CD8-positive, alpha-beta T cell (primary cell): ENCODE measurements at regions of chr10 and their contacts with region 1.

Region 1: DNA sequence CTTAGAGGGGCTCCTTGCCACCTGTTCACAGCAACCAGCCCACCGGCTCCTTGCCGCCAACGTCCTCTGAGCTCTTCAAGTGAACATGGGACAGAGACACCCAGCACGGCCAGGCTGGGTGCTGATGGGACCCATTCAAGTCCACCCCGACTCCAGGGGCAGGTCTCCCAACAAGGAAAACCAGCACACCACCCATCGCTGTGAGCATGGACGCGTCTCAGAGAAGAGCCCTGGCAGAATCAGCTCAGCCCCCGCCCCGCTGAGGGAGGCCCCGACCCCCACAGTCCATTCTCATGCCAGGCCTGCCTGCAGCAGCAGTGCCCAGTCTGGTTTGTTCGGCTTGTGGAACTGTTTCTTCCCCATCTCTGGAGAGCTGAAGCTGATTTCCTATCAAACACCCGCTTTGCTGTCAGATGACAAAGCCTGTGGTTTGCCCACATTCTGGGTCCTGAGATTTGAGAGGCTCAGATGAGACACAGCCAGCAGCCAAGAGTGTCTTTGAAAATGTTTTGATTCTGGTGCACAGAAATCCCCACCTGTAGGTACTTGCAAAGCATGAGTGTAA is 216.6 kb downstream of the ZMYND11 start:
- DNase-seq: peak in 8 of 9 experiments; percentile 14 to 78 (median 54)
- ATAC-seq: peak; percentile 88
- H3K4me3 ChIP-seq: no peak overlapping the region
- H3K4me3 Mint-ChIP-seq: peak overlapping the region; percentile 72
- H3K27ac ChIP-seq: peak overlapping the region in 1 of 2 experiments; percentile 10
- H3K27ac Mint-ChIP-seq: peak overlapping the region; percentile 88
- H3K4me1 ChIP-seq: peaks cover 17% of the 10 kb centered on the region
- H3K4me1 Mint-ChIP-seq: peaks cover 25% of the 10 kb centered on the region
- H3K27me3 ChIP-seq: no peaks in the 10 kb centered on the region
- H3K27me3 Mint-ChIP-seq: no peaks in the 10 kb centered on the region
- CTCF ChIP-seq: no peak

Region 2: DNA sequence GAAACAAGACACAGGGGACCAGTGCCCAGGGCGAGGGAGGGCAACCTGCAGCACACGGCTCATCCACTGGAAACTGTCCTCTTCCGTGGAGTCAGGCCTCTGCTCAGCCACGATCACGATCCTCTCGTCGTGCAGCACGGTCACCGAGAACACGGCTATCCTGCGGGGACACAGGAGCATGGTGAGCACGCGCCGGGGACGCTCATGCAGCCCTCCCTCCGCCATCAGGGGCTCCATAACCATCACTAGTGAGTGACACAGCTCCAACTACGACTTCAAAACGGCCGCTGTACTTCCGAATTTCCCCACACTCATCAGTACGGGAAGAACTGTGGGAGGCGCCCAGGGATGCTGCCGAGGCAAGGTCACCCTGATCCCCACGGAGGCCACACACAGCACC is 11.3 kb after region 1 on chr10:
- CTCF ChIA-PET with region 1: no interaction called
- POLR2A ChIA-PET with region 1: no interaction called
- intact Hi-C with region 1: no loop called
- DNase-seq: no peak
- ATAC-seq: no peak
- H3K4me3 ChIP-seq: no peak overlapping the region
- H3K4me3 Mint-ChIP-seq: no peak overlapping the region
- H3K27ac ChIP-seq: no peak overlapping the region
- H3K27ac Mint-ChIP-seq: no peak overlapping the region
- H3K4me1 ChIP-seq: no peaks in the 10 kb centered on the region
- H3K4me1 Mint-ChIP-seq: no peaks in the 10 kb centered on the region
- H3K27me3 ChIP-seq: no peaks in the 10 kb centered on the region
- H3K27me3 Mint-ChIP-seq: no peaks in the 10 kb centered on the region
- CTCF ChIP-seq: no peak

Region 3: DNA sequence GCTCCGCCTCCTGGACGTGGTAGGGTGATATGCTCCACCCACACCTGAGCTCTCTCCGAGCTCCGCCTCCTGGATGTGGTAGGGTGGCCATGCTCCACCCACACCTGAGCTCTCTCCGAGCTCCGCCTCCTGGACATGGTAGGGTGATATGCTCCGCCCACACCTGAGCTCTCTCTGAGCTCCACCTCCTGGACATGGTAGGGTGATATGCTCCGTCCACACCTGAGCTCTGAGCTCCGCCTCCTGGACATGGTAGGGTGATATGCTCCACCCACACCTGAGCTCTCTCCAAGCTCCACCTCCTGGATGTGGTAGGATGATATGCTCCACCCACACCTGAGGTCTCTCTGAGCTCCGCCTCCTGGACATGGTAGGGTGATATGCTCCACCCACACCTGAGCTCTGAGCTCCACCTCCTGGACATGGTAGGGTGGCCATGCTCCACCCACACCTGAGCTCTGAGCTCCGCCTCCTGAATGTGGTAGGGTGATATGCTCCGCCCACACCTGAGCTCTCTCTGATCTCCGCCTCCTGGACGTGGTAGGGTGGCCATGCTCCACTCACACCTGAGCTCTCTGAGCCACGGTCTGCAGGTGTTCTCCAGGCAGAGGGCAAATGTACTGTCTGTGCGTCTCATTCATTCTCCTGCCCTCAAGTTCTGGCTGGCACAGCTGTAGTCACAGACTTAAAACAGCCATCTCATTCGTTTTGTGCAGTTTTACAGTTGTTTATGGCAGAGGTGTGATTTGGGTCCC is 85.2 kb after region 1 on chr10:
- CTCF ChIA-PET with region 1: no interaction called
- POLR2A ChIA-PET with region 1: interaction called, 4 read pairs
- intact Hi-C with region 1: loop called in 1 of 2 experiments (anchors 10 kb)
- DNase-seq: peak in 2 of 9 experiments; percentile 15 to 35
- ATAC-seq: no peak
- H3K4me3 ChIP-seq: no peak overlapping the region
- H3K4me3 Mint-ChIP-seq: peak overlapping the region; percentile 23
- H3K27ac ChIP-seq: no peak overlapping the region
- H3K27ac Mint-ChIP-seq: peak overlapping the region; percentile 76
- H3K4me1 ChIP-seq: peaks cover 35% of the 10 kb centered on the region
- H3K4me1 Mint-ChIP-seq: peaks cover 36% of the 10 kb centered on the region
- H3K27me3 ChIP-seq: no peaks in the 10 kb centered on the region
- H3K27me3 Mint-ChIP-seq: no peaks in the 10 kb centered on the region
- CTCF ChIP-seq: no peak

Region 4: GRCh38 chr10:1347962-1348772 is 996.3 kb after region 1 on chr10:
- CTCF ChIA-PET with region 1: no interaction called
- POLR2A ChIA-PET with region 1: no interaction called
- intact Hi-C with region 1: no loop called
- DNase-seq: no peak
- ATAC-seq: no peak
- H3K4me3 ChIP-seq: no peak overlapping the region
- H3K4me3 Mint-ChIP-seq: no peak overlapping the region
- H3K27ac ChIP-seq: no peak overlapping the region
- H3K27ac Mint-ChIP-seq: no peak overlapping the region
- H3K4me1 ChIP-seq: no peaks in the 10 kb centered on the region
- H3K4me1 Mint-ChIP-seq: no peaks in the 10 kb centered on the region
- H3K27me3 ChIP-seq: no peaks in the 10 kb centered on the region
- H3K27me3 Mint-ChIP-seq: peaks cover 2% of the 10 kb centered on the region
- CTCF ChIP-seq: no peak